Activated CD4-positive, alpha-beta T cell treated with anti-CD3 and anti-CD28 coated beads for 36 hours (primary cell): ENCODE measurements at regions of chr15 and their contacts with region 1.

Region 1: GRCh38 chr15:19987389-19988048 is 554.1 kb downstream of the GOLGA6L6 start:
- DNase-seq: peak; percentile 44
- ATAC-seq: no peak
- H3K4me3 Mint-ChIP-seq: no peak overlapping the region
- H3K27ac Mint-ChIP-seq: no peak overlapping the region
- H3K4me1 Mint-ChIP-seq: no peaks in the 10 kb centered on the region
- H3K27me3 Mint-ChIP-seq: no peaks in the 10 kb centered on the region

Region 2: DNA sequence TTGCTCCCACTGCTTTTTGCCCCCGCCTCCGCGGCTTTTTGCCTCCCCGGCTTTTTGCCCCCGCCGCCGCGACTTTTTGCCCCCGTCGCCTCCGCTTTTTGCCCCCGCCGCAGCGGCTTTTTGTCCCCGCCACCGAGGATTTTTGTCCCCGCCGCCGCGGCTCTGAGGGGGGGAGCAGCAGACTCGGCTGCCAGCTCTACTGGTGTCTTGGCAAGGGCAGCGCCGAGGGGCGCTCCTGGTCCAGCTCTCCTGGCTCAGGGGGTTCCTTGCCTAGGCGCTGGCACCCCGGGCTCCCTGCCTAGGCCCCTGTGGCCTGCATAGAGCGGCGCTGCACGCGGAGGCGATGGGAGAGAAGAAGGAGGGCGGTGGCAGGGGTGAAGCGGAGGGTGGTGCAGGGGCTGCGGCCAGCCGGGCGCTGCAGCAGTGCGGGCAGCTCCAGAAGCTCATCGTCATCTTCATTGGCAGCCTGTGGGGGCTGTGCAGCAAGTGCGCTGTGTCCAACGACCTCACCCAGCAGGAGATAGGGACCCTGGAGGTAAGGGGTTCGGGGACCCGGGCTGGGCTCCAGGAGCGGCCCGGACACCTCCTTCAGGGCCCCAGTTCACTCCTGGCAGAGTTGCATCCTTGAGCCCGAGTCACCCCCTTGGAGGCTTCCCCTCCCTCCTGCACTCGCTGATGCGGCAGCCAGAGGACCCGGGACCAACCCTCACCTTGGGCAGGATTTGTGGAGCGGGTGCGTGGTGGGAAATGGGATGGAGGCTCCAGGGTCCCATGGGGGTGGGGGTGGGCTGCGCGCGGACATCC is 88.3 kb before region 1 on chr15:
- CTCF ChIA-PET with region 1: no interaction called
- POLR2A ChIA-PET with region 1: no interaction called
- intact Hi-C with region 1: no loop called
- DNase-seq: no peak
- ATAC-seq: no peak
- H3K4me3 Mint-ChIP-seq: no peak overlapping the region
- H3K27ac Mint-ChIP-seq: no peak overlapping the region
- H3K4me1 Mint-ChIP-seq: no peaks in the 10 kb centered on the region
- H3K27me3 Mint-ChIP-seq: no peaks in the 10 kb centered on the region

Region 3: DNA sequence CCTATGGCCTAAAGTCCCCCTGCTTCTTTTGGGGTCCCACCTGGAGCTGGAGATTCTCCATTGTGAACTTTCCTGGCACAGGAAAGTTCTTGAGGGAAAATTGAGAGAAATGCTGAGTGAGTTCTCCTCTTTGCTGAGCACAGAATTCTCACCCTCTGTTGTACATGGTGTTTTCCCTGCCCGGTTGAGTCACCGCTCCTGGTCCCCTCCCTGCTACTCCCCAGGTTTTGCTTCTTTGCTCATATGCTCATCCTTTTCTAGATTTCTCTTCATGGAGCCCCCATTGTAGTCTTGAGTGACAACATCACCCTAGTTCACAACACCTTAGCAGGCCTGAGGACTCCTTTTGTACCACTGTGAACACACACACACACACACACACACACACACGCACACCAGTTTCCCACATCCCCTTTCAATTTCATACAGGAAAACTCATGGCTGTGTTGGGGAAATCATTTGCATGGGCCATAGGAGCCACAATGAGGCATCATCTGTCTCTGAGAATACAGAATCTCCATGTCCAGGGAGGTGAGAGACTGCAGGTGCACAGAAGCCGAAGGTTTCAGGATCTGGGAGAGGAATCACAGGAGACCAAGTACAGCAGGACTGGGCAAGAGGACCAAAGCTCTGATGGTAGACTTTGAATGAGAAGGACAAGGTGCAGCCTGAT is 31.3 kb before region 1 on chr15:
- CTCF ChIA-PET with region 1: interaction called, 4 read pairs
- POLR2A ChIA-PET with region 1: no interaction called
- intact Hi-C with region 1: loop called in 1 of 2 experiments (anchors 5 kb)
- DNase-seq: no peak
- ATAC-seq: no peak
- H3K4me3 Mint-ChIP-seq: no peak overlapping the region
- H3K27ac Mint-ChIP-seq: no peak overlapping the region
- H3K4me1 Mint-ChIP-seq: no peaks in the 10 kb centered on the region
- H3K27me3 Mint-ChIP-seq: no peaks in the 10 kb centered on the region

Region 4: GRCh38 chr15:19973718-19974117 is 13.8 kb before region 1 on chr15:
- CTCF ChIA-PET with region 1: no interaction called
- POLR2A ChIA-PET with region 1: no interaction called
- intact Hi-C with region 1: no loop called
- DNase-seq: peak; percentile 54
- ATAC-seq: no peak
- H3K4me3 Mint-ChIP-seq: no peak overlapping the region
- H3K27ac Mint-ChIP-seq: no peak overlapping the region
- H3K4me1 Mint-ChIP-seq: no peaks in the 10 kb centered on the region
- H3K27me3 Mint-ChIP-seq: no peaks in the 10 kb centered on the region